A549 (cell line): ENCODE measurements at regions of chr5 and their contacts with region 1.

Region 1: DNA sequence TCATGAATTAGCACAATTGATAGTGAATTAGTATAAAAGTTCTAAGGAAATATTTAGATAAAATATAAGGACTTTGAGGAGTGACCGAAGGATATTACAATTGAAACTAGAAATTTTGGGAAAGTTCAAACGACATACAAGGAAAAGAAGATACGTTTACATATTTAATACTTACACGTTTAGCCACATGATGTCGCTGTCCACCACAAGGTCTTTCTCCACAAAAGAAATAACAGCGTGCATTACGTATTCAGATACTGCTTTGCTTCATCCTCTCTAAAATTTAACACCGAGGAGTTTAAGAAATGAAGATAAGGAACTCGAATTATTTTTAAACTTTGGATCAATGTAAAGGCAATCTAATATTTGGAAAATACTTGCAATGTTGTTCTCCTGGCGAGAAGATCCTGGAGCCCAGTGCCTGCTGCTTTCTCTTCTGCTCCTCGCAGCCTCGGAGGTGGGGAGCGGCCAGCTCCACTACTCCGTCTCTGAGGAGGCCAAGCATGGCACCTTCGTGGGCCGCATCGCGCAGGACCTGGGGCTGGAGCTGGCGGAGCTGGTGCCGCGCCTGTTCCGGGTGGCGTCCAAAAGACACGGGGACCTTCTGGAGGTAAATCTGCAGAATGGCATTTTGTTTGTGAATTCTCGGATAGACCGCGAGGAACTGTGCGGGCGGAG is at the start of gene PCDHA3:
- DNase-seq: peak; percentile 22 to 74
- ATAC-seq: peak; percentile 80 to 89; a peak in 5 of 6 replicates
- H3K4me3 ChIP-seq: peak within 1 kb of the TSS; percentile 49
- H3K27ac ChIP-seq: peak within 1 kb of the TSS; percentile 29 to 74; a peak in 5 of 6 replicates
- H3K4me1 ChIP-seq: no peaks in the 10 kb centered on the region
- CTCF ChIP-seq: peak; percentile 61
- EP300 ChIP-seq: no peak
- POLR2A ChIP-seq: no peak
- RAD21 ChIP-seq: peak; percentile 29 to 32; a peak in 3 of 5 replicates
- polyA plus RNA-seq, gene PCDHA3: 1.5 and 1.7 TPM in 2 replicates

Region 2: GRCh38 chr5:140113699-140114263 is 687.2 kb before region 1 on chr5 and contains the start of gene PURA:
- CTCF ChIA-PET with region 1: no interaction called
- POLR2A ChIA-PET with region 1: no interaction called
- DNase-seq: peak; percentile 92 to 94
- ATAC-seq: peak; percentile 91 to 93
- H3K4me3 ChIP-seq: peak within 1 kb of the TSS; percentile 68
- H3K27ac ChIP-seq: peak within 1 kb of the TSS; percentile 92 to 96
- H3K4me1 ChIP-seq: peaks cover 48% of the 10 kb centered on the region
- CTCF ChIP-seq: peak; percentile 24; the same call in 2 of the 3 replicates
- EP300 ChIP-seq: no peak
- POLR2A ChIP-seq: peak; percentile 85
- RAD21 ChIP-seq: 0 out of 5 replicates have a peak, but pooled peaks of 1 of the 2 experiments have one; percentile 19
- polyA plus RNA-seq, gene PURA: 3.4 and 4.5 TPM in 2 replicates

Region 3: GRCh38 chr5:140401362-140402257 is 399.3 kb before region 1 on chr5 and contains the start of gene ANKHD1:
- CTCF ChIA-PET with region 1: no interaction called
- POLR2A ChIA-PET with region 1: no interaction called
- DNase-seq: peak; percentile 97 to 100
- ATAC-seq: peak; percentile 83 to 86
- H3K4me3 ChIP-seq: peak within 1 kb of the TSS; percentile 65
- H3K27ac ChIP-seq: peak within 1 kb of the TSS; percentile 91 to 95
- H3K4me1 ChIP-seq: peaks cover 37% of the 10 kb centered on the region
- CTCF ChIP-seq: no peak
- EP300 ChIP-seq: no peak
- POLR2A ChIP-seq: peak; percentile 85
- RAD21 ChIP-seq: no peak
- polyA plus RNA-seq, gene ANKHD1: 94.1 and 111 TPM in 2 replicates

Region 4: DNA sequence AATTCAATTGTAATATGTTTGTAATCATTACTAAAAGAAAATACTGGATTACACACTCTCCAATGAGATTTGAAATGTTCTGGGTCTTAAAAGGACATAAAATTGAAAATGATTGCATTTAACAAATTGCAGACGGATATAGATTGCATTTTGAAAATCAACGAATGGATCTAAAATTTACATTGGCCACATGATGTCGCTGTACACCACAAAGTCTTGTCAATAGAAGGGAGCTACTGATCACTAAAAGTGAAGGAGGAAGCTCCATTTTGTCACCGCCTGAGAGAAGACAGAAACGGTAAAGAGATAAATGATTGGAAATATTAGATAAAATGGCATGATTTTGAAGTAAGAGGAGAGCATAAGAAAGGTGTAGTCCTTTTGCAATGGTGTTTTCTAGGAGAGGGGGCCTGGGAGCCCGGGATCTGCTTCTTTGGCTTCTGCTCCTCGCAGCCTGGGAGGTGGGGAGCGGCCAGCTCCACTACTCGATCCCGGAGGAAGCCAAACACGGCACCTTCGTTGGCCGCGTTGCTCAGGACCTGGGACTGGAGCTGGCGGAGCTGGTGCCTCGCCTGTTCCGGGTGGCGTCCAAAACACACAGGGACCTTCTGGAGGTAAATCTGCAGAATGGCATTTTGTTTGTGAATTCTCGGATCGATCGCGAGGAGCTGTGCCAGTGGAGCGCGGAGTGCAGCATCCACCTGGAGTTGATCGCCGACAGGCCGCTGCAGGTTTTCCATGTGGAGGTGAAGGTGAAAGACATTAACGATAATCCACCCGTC is 14.9 kb before region 1 on chr5 and contains the start of gene PCDHA1:
- CTCF ChIA-PET with region 1: interaction called, 11 read pairs
- POLR2A ChIA-PET with region 1: no interaction called
- DNase-seq: peak; percentile 29 to 46
- ATAC-seq: peak in 1 of 2 experiments; percentile 56; a peak in 2 of 6 replicates
- H3K4me3 ChIP-seq: no peak within 1 kb of the TSS
- H3K27ac ChIP-seq: no peak within 1 kb of the TSS
- H3K4me1 ChIP-seq: no peaks in the 10 kb centered on the region
- CTCF ChIP-seq: peak; percentile 23; the same call in 2 of the 3 replicates
- EP300 ChIP-seq: no peak
- POLR2A ChIP-seq: no peak
- RAD21 ChIP-seq: peak in 1 of 2 experiments; percentile 29; a peak in 2 of 5 replicates
- polyA plus RNA-seq, gene PCDHA1: 0.37 and 0.52 TPM in 2 replicates

Region 5: DNA sequence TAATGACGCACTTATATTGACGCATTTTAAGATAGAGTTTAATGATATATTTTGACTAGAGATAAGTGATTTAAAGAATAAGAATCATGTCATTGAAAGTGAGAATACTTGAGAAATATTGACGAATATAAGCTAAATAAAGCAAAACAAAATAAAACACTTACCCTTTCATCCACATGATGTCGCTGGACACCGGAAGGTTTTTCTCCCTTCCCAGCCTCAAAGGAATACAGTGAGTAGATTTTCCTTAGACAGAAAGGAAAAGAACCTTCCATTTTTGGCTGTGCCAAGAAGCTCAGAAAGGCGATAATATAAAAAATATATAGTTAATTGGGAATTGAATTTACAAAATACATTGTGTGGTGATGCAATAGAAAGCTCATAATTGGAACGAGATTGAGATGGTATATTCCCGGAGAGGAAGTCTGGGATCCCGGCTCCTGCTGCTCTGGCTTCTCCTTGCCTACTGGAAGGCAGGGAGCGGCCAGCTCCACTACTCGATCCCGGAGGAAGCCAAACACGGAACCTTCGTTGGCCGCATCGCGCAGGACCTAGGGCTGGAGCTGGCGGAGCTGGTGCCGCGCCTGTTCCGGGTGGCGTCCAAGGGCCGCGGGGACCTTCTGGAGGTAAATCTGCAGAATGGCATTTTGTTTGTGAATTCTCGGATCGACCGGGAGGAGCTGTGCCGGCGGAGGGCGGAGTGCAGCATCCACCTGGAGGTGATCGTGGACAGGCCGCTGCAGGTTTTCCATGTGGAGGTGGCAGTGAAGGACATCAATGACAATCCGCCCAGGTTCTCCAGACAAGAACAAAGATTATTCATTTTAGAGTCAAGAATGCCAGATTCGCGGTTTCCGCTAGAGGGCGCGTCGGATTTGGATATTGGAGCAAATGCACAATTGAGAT is 20.7 kb after region 1 on chr5 and contains the start of gene PCDHA5:
- CTCF ChIA-PET with region 1: interaction called, 74 read pairs
- POLR2A ChIA-PET with region 1: no interaction called
- DNase-seq: peak; percentile 69 to 73
- ATAC-seq: peak; percentile 85 to 92
- H3K4me3 ChIP-seq: peak within 1 kb of the TSS; percentile 57
- H3K27ac ChIP-seq: peak within 1 kb of the TSS; percentile 53 to 74
- H3K4me1 ChIP-seq: no peaks in the 10 kb centered on the region
- CTCF ChIP-seq: peak; percentile 63
- EP300 ChIP-seq: no peak
- POLR2A ChIP-seq: no peak
- RAD21 ChIP-seq: peak; percentile 43 to 65; a peak in 4 of 5 replicates
- polyA plus RNA-seq, gene PCDHA5: 0.32 and 0.62 TPM in 2 replicates